Transverse colon (tissue), 4 donors: ENCODE measurements at regions of chr10 and their contacts with region 1.

Region 1: GRCh38 chr10:6667679-6668270 is 87.7 kb upstream of the PRKCQ start:
- DNase-seq: peak; percentile 9
- H3K4me3 ChIP-seq: no peak overlapping the region
- H3K27ac ChIP-seq: no peak overlapping the region
- H3K4me1 ChIP-seq: no peaks in the 10 kb centered on the region
- H3K27me3 ChIP-seq: peaks cover 13% of the 10 kb centered on the region
- CTCF ChIP-seq: peak; percentile 15 to 34 (median 18)
- EP300 ChIP-seq: no peak
- POLR2A ChIP-seq: no peak

Region 2: DNA sequence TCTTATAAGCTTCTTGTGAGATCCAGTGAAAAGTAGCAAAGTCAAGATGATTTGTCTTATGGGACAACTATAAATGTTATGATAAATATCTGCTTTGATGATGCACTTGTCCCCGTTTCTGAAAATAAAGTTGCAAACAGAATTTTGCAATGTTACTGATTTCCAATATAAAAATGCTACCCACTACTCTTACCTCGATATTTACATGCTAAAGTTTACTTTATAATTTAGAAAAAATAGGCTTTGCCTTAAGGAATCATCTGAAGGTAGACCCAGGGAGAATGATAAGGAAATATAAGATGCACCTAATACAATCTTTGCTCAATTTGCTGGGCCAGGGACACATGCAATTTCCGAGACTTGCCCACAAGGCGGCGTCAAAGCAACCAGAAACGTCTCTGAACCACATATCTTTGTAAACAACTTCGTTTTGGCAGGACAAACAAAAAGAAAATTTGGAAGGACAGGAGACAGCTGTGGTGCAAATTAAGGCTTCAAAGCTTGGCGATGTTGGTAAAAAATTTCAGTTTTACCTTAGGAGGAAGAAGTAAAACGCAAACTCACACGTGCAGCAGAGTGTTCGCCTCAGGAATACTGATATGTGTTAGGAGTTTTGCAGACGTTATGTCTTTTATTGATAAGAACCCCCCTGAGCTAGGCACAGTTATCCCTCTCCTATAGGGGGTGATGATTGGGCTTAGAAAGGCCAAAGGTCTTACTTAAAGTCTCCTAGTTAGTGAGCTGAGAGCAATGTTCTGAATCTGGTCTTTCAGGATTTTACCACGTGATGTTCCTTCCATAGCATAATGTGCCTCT is 222.1 kb before region 1 on chr10:
- in situ Hi-C with region 1: loop called in 1 of 4 experiments (anchors 25 kb)
- intact Hi-C with region 1: no loop called
- DNase-seq: peak; percentile 45
- H3K4me3 ChIP-seq: no peak overlapping the region
- H3K27ac ChIP-seq: no peak overlapping the region
- H3K4me1 ChIP-seq: peaks cover 0 to 6% (median 0%) of the 10 kb centered on the region in 4 donors
- H3K27me3 ChIP-seq: no peaks in the 10 kb centered on the region
- CTCF ChIP-seq: peak; percentile 37 to 58 (median 49)
- EP300 ChIP-seq: no peak
- POLR2A ChIP-seq: no peak

Region 3: DNA sequence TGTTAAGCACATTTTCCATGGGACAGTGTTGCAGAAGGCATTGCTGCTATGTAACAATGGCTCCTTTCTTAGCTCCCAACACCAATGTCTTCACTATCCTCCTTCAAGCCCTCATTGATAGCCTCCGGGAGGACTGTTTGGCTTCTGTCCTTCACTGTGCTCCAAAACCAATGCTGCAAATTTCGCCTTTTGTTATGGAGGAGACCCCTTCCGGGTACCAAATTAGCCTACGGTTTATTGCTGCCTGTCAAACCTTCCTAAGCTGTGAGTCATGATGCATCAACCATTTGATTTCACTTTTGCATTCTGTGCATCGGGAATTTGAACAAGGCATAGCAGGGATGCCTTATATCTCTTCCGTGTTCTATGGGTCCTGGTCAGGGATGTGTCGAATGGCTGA is 1819.6 kb after region 1 on chr10:
- in situ Hi-C with region 1: no loop called
- intact Hi-C with region 1: no loop called
- DNase-seq: no peak
- H3K4me3 ChIP-seq: no peak overlapping the region
- H3K27ac ChIP-seq: no peak overlapping the region
- H3K4me1 ChIP-seq: no peaks in the 10 kb centered on the region
- H3K27me3 ChIP-seq: no peaks in the 10 kb centered on the region
- CTCF ChIP-seq: no peak
- EP300 ChIP-seq: no peak
- POLR2A ChIP-seq: no peak